ENCODE measurements at regions of chr7 and their contacts with region 1.

Region 1: DNA sequence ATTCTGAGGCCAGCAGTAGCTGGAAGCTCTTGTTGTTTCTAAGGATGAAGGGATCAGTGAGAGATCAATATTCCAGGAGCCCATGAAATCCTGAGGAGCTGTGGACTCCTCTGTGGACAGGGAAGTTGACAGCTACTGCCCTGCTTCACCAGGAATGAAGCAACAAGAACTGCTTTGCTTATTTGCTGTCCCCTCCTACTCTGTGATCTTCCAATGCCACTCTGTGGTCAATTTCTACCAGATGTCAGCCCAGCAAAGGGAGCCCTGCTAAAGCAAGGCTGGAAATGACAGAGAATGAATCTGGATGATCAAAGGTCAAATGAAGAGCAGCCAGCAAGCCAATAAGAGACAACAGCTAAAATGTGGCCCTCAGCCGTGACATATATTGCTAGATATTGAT is 227.5 kb upstream of the CHRM2 start:
- DNase-seq: no peak
- ATAC-seq: no peak
- H3K4me3 Mint-ChIP-seq: no peak overlapping the region
- H3K27ac Mint-ChIP-seq: no peak overlapping the region
- H3K4me1 Mint-ChIP-seq: no peaks in the 10 kb centered on the region
- H3K27me3 Mint-ChIP-seq: no peaks in the 10 kb centered on the region
- CTCF ChIP-seq: no peak

Region 2: GRCh38 chr7:136353287-136353686 is 287.7 kb before region 1 on chr7:
- CTCF ChIA-PET with region 1: no interaction called
- POLR2A ChIA-PET with region 1: no interaction called
- intact Hi-C with region 1: loop called (anchors 5 kb)
- DNase-seq: no peak
- ATAC-seq: no peak
- H3K4me3 Mint-ChIP-seq: no peak overlapping the region
- H3K27ac Mint-ChIP-seq: no peak overlapping the region
- H3K4me1 Mint-ChIP-seq: no peaks in the 10 kb centered on the region
- H3K27me3 Mint-ChIP-seq: no peaks in the 10 kb centered on the region
- CTCF ChIP-seq: no peak